ENCODE measurements at regions of chr11 and their contacts with region 1.

Region 1: DNA sequence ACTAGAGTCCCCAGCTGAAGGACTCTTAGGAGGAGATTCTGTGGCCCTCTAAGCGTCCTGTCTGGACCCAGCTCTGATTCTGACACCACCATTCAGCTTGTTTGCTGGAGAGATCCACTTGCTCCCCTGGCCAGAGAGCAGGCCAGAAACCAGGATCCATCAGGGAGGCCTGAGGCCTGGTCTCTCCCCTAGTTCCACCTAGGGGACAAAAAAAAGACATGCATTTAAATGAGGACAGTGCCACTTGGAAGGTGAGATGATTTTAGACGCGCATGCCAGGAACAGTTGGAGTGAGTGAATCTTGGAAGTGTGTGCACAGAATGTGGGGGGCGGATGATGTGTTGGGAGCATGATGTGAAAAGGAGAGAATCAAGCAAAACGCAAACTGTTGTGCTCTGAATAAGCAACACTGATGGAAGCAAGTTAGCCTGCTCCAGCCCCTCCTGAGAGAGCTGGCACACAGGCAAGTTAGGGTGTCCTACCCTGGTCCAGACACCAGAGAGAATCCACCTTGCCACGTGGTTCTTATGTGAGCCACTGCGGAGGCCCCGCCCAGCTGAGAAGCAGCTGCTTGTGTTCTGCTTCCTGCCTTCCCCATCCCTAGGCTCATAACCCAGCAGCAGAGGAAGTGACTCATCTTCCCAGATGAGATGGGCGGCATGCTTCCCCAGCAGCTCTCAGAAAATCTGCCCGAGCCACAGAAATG is 8.0 kb upstream of the SLCO2B1 start:
- DNase-seq: peak; percentile 88
- ATAC-seq: peak; percentile 97
- H3K4me3 Mint-ChIP-seq: peak overlapping the region; percentile 20
- H3K27ac Mint-ChIP-seq: peak overlapping the region; percentile 78
- H3K4me1 Mint-ChIP-seq: peaks cover 30% of the 10 kb centered on the region
- H3K27me3 Mint-ChIP-seq: peaks cover 2% of the 10 kb centered on the region

Region 2: DNA sequence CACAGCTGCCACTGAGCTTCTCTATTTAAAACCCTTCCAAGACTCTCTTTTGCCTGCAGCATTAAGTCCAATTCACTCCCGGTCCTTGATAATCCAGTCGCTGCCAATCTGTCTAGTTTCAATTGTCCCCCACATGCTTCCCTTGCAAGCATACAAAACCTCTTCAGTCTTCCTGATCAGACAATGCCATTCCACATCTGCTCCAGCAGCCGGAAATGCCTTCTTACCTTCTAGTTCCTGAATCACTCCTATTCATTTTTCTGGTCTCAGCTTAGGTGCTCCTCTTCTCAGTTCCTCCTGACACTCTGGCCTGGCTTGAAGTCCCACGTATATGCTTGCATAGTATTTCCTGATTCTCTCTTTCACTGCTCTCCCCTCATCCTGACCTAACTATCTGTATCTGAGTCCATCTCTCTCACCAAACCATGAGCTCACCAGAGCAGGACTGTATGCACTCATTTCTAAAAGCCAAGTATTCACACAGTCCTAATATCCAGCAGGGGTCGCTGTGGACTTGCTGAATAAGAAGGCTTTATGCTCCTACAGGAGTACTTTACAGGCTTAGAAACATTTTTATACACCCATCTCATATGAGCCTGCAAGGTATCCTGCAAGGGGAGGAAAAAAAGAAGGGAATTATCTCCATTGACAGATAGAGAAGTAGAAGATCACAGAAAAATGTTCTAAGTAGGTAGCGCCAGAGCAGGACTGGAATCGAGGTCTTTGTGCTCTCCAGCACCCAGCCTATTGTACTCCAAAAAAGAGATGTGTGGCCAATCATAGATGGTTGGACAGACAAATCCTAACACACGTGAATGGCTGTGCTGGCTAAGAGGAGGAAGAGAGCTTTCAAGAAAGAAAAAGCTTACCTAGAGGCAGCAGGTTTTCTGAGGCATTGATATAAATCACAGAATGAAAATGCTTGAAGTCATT is 213.2 kb before region 1 on chr11:
- CTCF ChIA-PET with region 1: interaction called, 18 read pairs
- POLR2A ChIA-PET with region 1: no interaction called
- intact Hi-C with region 1: loop called (anchors 1 to 5 kb)
- DNase-seq: peak; percentile 80
- ATAC-seq: peak; percentile 74
- H3K4me3 Mint-ChIP-seq: no peak overlapping the region
- H3K27ac Mint-ChIP-seq: no peak overlapping the region
- H3K4me1 Mint-ChIP-seq: peaks cover 11% of the 10 kb centered on the region
- H3K27me3 Mint-ChIP-seq: no peaks in the 10 kb centered on the region

Region 3: GRCh38 chr11:75022759-75023396 is 120.0 kb before region 1 on chr11:
- CTCF ChIA-PET with region 1: interaction called, 50 read pairs
- POLR2A ChIA-PET with region 1: no interaction called
- intact Hi-C with region 1: loop called (anchors 1 kb)
- DNase-seq: peak; percentile 86
- ATAC-seq: peak; percentile 91
- H3K4me3 Mint-ChIP-seq: no peak overlapping the region
- H3K27ac Mint-ChIP-seq: no peak overlapping the region
- H3K4me1 Mint-ChIP-seq: no peaks in the 10 kb centered on the region
- H3K27me3 Mint-ChIP-seq: no peaks in the 10 kb centered on the region

Region 4: GRCh38 chr11:75204685-75205563 is 62.1 kb after region 1 on chr11:
- CTCF ChIA-PET with region 1: interaction called, 222 read pairs
- POLR2A ChIA-PET with region 1: no interaction called
- intact Hi-C with region 1: loop called (anchors 1 kb)
- DNase-seq: peak; percentile 93
- ATAC-seq: peak; percentile 99
- H3K4me3 Mint-ChIP-seq: no peak overlapping the region
- H3K27ac Mint-ChIP-seq: no peak overlapping the region
- H3K4me1 Mint-ChIP-seq: no peaks in the 10 kb centered on the region
- H3K27me3 Mint-ChIP-seq: peaks cover 2% of the 10 kb centered on the region

Region 5: GRCh38 chr11:75241036-75241905 is 98.4 kb after region 1 on chr11:
- CTCF ChIA-PET with region 1: interaction called, 458 read pairs
- POLR2A ChIA-PET with region 1: no interaction called
- intact Hi-C with region 1: loop called (anchors 1 kb)
- DNase-seq: peak; percentile 92
- ATAC-seq: peak; percentile 88
- H3K4me3 Mint-ChIP-seq: peak overlapping the region; percentile 59
- H3K27ac Mint-ChIP-seq: no peak overlapping the region
- H3K4me1 Mint-ChIP-seq: peaks cover 8% of the 10 kb centered on the region
- H3K27me3 Mint-ChIP-seq: peaks cover 23% of the 10 kb centered on the region

Region 6: GRCh38 chr11:75254326-75254725 is 111.5 kb after region 1 on chr11:
- CTCF ChIA-PET with region 1: interaction called, 458 read pairs
- POLR2A ChIA-PET with region 1: no interaction called
- intact Hi-C with region 1: no loop called
- DNase-seq: no peak
- ATAC-seq: no peak
- H3K4me3 Mint-ChIP-seq: no peak overlapping the region
- H3K27ac Mint-ChIP-seq: no peak overlapping the region
- H3K4me1 Mint-ChIP-seq: no peaks in the 10 kb centered on the region
- H3K27me3 Mint-ChIP-seq: no peaks in the 10 kb centered on the region

Region 7: DNA sequence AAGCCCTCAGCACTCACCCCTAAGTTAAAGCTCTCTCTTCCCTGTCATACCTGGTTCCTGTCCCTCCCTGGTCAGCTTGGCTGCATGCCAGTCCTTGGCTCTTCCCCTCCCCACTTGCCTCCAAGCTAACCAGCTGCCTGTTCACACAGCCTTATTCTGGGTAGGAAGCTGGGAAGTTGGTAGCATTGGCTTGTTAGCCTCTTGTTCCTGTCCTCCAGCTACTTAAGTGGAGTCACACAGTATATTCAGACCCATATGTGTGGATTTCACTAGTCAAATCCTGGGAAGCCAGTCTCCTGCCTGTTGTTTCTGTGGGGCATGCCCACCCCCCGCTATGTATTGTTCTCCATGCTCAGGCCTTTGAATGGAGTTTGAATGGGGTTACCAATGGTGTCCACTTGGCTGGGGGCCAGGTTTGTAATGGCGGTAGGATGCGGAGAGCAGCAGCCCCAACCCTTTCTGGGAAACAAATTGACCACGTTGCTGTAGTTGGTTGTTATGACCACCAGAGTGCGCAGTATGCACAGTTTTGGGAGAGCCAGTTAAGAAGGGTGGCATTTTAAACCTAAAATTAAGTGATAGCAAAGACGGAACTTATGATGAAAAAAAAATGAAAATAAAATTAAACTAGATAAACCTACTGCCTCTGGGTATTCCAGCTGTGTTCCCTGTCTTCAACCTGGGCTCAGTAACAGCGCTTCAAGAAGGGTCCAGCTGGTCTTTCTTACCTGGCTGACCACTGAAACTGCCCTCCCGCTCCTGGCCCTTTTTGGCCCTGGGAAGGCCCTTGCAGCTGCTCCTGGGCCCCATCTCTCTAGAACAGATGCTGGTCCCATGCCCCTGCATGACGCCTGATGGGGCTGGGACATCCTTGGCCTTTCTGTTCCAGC is 245.8 kb after region 1 on chr11:
- CTCF ChIA-PET with region 1: interaction called, 3 read pairs
- POLR2A ChIA-PET with region 1: no interaction called
- intact Hi-C with region 1: loop called in 1 of 2 experiments (anchors 5 kb)
- DNase-seq: peak; percentile 83
- ATAC-seq: peak; percentile 92
- H3K4me3 Mint-ChIP-seq: no peak overlapping the region
- H3K27ac Mint-ChIP-seq: no peak overlapping the region
- H3K4me1 Mint-ChIP-seq: peaks cover 10% of the 10 kb centered on the region
- H3K27me3 Mint-ChIP-seq: peaks cover 4% of the 10 kb centered on the region